Stomach (tissue), 19 donors: ENCODE measurements at regions of chr6 and their contacts with region 1.

Region 1: DNA sequence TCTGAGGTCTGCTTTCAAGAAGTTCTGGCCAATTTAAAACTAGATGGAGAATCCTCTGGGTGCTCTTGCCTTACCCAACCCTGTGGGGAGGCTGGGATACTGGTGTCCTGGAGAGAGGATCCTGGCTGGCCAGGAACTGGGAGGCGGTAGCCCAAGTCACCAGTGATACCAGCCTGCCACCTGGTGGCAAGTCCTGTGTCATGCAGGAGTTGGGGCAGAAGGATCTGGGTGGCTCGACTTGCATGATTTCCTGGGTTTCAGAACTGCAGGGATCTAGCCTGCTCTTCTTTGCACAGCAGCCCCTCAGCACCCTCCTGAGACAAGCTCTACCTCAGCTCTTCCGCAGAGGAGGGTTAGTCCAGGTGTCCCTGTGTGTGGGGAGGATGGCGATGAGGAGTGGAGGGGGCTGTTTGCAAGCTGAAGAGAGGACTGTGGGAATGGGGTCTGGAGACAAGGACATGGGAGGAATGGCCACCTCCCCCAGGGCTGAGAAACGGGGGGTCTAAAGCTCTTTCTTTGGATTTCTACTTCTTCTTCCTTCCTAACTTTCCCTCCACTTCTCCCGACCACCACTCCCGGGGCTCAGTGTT is 4.2 kb downstream of the KCNK17 start:
- DNase-seq: peak; percentile 78 to 88
- H3K4me3 ChIP-seq: no peak overlapping the region
- H3K27ac ChIP-seq: no peak overlapping the region
- H3K4me1 ChIP-seq: peaks cover 13 to 26% (median 20%) of the 10 kb centered on the region in 4 donors
- H3K27me3 ChIP-seq: peaks cover 5 to 59% (median 30%) of the 10 kb centered on the region in 3 donors
- CTCF ChIP-seq: peak in 6 of 7 experiments; percentile 50 to 88 (median 86)
- EP300 ChIP-seq: no peak
- POLR2A ChIP-seq: no peak

Region 2: GRCh38 chr6:38973178-38974054 is 336.6 kb before region 1 on chr6:
- intact Hi-C with region 1: loop called (anchors 10 kb)
- DNase-seq: peak in 1 of 2 donors; percentile 88
- H3K4me3 ChIP-seq: no peak overlapping the region
- H3K27ac ChIP-seq: no peak overlapping the region
- H3K4me1 ChIP-seq: peaks cover 0 to 29% (median 15%) of the 10 kb centered on the region in 4 donors
- H3K27me3 ChIP-seq: peaks cover 0 to 23% (median 0%) of the 10 kb centered on the region in 3 donors
- CTCF ChIP-seq: peak in 5 of 7 experiments; percentile 41 to 73 (median 49)
- EP300 ChIP-seq: no peak
- POLR2A ChIP-seq: no peak